ENCODE measurements at regions of chr2 and their contacts with region 1.

Region 1: DNA sequence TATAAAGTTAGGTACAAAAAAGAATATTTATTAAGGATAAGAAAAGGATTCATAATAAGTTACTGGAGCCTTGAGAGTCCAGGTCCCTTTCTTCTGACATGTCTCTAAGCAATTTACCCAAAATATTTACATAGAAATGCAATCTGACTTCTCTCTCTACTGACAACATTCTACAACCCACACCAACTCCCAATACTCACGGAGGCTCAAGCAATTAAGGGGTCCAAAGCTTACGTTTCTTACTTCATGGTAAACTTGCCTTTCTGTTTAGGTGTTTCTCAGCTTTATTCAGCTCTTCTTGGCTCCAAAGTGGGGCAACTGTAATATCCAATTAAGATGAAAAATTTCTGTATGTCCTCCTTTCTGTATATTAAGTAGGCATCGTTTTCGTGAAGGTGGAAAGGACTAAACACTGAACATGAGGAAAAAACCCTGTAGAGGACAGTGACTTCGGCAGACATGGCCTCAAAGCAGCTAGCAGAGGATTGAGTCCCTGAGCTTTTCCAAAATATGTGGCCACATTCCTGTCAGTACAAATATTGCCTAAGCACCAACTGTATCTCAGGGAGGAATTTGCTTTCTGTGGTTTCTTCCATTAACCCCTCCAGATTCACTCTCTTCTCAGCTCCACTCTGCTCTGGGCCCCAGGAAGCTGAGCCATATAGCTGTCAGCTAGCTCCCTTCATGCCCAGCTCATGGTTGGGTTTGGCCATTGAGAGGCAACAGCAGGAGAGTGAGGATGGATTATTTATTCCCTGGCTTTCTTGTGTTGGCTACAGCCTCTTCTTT is 67.9 kb upstream of the GLS start:
- DNase-seq: no peak
- ATAC-seq: no peak
- H3K4me3 ChIP-seq: no peak overlapping the region
- H3K27ac ChIP-seq: no peak overlapping the region
- H3K4me1 ChIP-seq: no peaks in the 10 kb centered on the region
- H3K27me3 ChIP-seq: no peaks in the 10 kb centered on the region
- CTCF ChIP-seq: no peak

Region 2: GRCh38 chr2:190382851-190383250 is 429.8 kb before region 1 on chr2:
- intact Hi-C with region 1: loop called in 3 of 10 experiments (anchors 5 to 10 kb)
- DNase-seq: peak in 1 of 2 donors; percentile 26
- ATAC-seq: peak in 5 of 8 donors; percentile 50 to 76 (median 67)
- H3K4me3 ChIP-seq: no peak overlapping the region
- H3K27ac ChIP-seq: no peak overlapping the region
- H3K4me1 ChIP-seq: peaks cover 0 to 11% (median 0%) of the 10 kb centered on the region in 9 donors
- H3K27me3 ChIP-seq: no peaks in the 10 kb centered on the region
- CTCF ChIP-seq: peak; percentile 34 to 73 (median 58)

Region 3: DNA sequence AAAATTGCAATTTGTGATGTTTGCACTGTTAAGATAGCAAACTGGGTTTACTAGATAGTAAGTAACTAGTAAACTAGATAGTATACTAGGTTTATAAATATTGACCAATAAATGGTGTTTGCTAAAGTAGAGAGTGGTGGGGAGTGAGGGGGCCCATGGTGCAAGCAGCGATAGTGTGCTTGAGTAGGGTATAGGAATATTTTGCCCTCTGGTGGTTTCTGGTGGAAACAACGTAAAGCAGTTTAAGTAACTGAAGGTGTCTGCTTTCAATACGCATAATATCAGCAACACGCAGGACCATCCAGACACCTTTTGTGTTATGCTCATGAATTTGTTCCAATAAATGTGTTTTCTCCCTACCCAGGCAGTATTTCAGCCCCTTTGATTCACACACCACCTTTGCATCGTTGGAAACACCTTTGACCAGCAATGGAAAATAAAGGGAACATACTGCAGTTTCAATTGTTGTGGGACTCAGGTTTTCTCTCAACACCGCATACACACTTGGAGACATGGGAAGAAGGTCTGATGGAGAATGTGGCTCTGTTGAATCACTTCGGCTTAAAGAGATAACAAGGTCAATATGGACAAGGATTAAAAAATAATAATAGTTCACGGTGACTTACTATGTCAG is 217.9 kb after region 1 on chr2:
- intact Hi-C with region 1: no loop called
- DNase-seq: no peak
- ATAC-seq: peak in 6 of 8 donors; percentile 49 to 76 (median 66)
- H3K4me3 ChIP-seq: no peak overlapping the region
- H3K27ac ChIP-seq: peak overlapping the region in 1 of 10 donors; percentile 52
- H3K4me1 ChIP-seq: peaks cover 0 to 61% (median 6%) of the 10 kb centered on the region in 9 donors
- H3K27me3 ChIP-seq: peaks cover 0 to 3% (median 0%) of the 10 kb centered on the region in 7 donors
- CTCF ChIP-seq: peak; percentile 21 to 72 (median 62)

Region 4: GRCh38 chr2:191533693-191534180 is 721.0 kb after region 1 on chr2:
- intact Hi-C with region 1: no loop called
- DNase-seq: no peak
- ATAC-seq: no peak
- H3K4me3 ChIP-seq: no peak overlapping the region
- H3K27ac ChIP-seq: no peak overlapping the region
- H3K4me1 ChIP-seq: peaks cover 0 to 5% (median 0%) of the 10 kb centered on the region in 9 donors
- H3K27me3 ChIP-seq: no peaks in the 10 kb centered on the region
- CTCF ChIP-seq: no peak

Region 5: GRCh38 chr2:191566344-191566743 is 753.6 kb after region 1 on chr2:
- intact Hi-C with region 1: no loop called
- DNase-seq: peak in 1 of 2 donors; percentile 47
- ATAC-seq: peak in 6 of 8 donors; percentile 52 to 75 (median 62)
- H3K4me3 ChIP-seq: no peak overlapping the region
- H3K27ac ChIP-seq: no peak overlapping the region
- H3K4me1 ChIP-seq: peaks cover 0 to 23% (median 0%) of the 10 kb centered on the region in 9 donors
- H3K27me3 ChIP-seq: peaks cover 0 to 32% (median 14%) of the 10 kb centered on the region in 7 donors
- CTCF ChIP-seq: peak; percentile 32 to 81 (median 74)